A549 (cell line): ENCODE measurements at regions of chr17 and their contacts with region 1.

Region 1: DNA sequence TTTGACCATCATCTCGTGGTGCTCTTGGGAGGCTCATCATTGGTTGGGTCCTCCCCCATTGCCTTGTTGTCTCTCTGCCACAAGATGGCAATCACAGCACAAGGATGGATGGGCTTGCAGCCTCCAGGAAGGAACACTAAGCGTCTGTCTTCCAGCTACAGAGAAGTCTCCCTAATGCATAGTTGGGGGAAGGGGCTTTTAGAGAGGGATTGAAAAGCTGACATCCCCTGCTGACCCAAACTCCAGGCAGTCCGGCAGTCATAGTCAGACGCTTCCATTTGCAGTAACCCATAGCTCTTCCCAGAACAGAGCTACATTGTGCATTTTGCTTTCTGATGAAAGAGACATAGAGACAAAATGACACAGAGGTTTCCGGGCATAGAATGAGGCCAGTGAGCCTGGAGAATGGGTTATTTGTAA is 111.4 kb downstream of the UTP18 start:
- DNase-seq: peak; percentile 86 to 88
- ATAC-seq: peak; percentile 96 to 98
- H3K4me3 ChIP-seq: no peak overlapping the region
- H3K27ac ChIP-seq: peak overlapping the region; percentile 37 to 59; a peak in 4 of 6 replicates
- H3K4me1 ChIP-seq: 0 out of 3 replicates have a peak, but pooled peaks cover 3% of the 10 kb centered on the region
- CTCF ChIP-seq: peak; percentile 94
- EP300 ChIP-seq: no peak
- POLR2A ChIP-seq: no peak
- RAD21 ChIP-seq: peak; percentile 98 to 100

Region 2: GRCh38 chr17:51185763-51186332 is 185.9 kb before region 1 on chr17:
- CTCF ChIA-PET with region 1: no interaction called
- POLR2A ChIA-PET with region 1: no interaction called
- DNase-seq: no peak
- ATAC-seq: no peak
- H3K4me3 ChIP-seq: no peak overlapping the region
- H3K27ac ChIP-seq: no peak overlapping the region
- H3K4me1 ChIP-seq: no peaks in the 10 kb centered on the region
- CTCF ChIP-seq: no peak
- EP300 ChIP-seq: no peak
- POLR2A ChIP-seq: no peak
- RAD21 ChIP-seq: no peak

Region 3: GRCh38 chr17:51391982-51392654 is 20.4 kb after region 1 on chr17:
- CTCF ChIA-PET with region 1: interaction called, 18 read pairs
- POLR2A ChIA-PET with region 1: no interaction called
- DNase-seq: peak in 1 of 2 experiments; percentile 28
- ATAC-seq: peak; percentile 40 to 60; a peak in 3 of 6 replicates
- H3K4me3 ChIP-seq: no peak overlapping the region
- H3K27ac ChIP-seq: peak overlapping the region; percentile 15 to 19; a peak in 3 of 6 replicates
- H3K4me1 ChIP-seq: peaks cover 18% of the 10 kb centered on the region
- CTCF ChIP-seq: no peak
- EP300 ChIP-seq: no peak
- POLR2A ChIP-seq: no peak
- RAD21 ChIP-seq: no peak

Region 4: GRCh38 chr17:51423421-51424154 is 51.8 kb after region 1 on chr17:
- CTCF ChIA-PET with region 1: interaction called, 21 read pairs
- POLR2A ChIA-PET with region 1: no interaction called
- DNase-seq: peak; percentile 39 to 75
- ATAC-seq: peak; percentile 76
- H3K4me3 ChIP-seq: peak overlapping the region; percentile 22; the same call in 1 of the 3 replicates
- H3K27ac ChIP-seq: peak overlapping the region; percentile 68 to 77
- H3K4me1 ChIP-seq: peaks cover 27% of the 10 kb centered on the region
- CTCF ChIP-seq: no peak
- EP300 ChIP-seq: peak; percentile 45 to 68; a peak in 2 of 5 replicates
- POLR2A ChIP-seq: no peak
- RAD21 ChIP-seq: 0 out of 5 replicates have a peak, but pooled peaks of 1 of the 2 experiments have one; percentile 19

Region 5: DNA sequence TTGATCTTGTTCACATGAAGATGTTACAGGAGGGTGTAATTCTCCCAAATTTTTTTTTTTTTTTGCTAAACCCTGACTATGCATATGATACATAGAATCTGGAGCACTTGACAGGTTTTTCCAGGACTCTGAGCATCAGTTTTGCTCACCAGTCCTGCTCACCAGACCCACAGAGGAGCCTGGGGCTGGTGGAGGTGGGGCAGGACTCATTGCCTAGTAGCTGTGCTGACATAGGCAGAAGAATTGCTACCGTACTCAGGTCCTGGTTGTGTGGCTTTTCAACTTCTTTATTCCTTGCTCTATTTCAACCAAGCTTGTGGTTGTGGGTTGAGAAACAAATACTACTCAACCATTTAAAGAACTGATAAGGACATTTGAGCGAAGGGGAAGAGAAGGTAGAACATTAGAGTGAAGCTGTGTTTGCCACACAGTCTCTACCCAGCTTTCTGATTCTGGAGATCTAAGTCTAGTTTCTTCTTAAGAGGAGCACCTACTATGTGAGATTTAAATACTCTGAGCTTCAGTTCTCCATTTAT is 101.0 kb after region 1 on chr17:
- CTCF ChIA-PET with region 1: interaction called, 13 read pairs
- POLR2A ChIA-PET with region 1: no interaction called
- DNase-seq: no peak
- ATAC-seq: 0 out of 6 replicates have a peak, but pooled peaks of 1 of the 2 experiments have one; percentile 38
- H3K4me3 ChIP-seq: no peak overlapping the region
- H3K27ac ChIP-seq: no peak overlapping the region
- H3K4me1 ChIP-seq: no peaks in the 10 kb centered on the region
- CTCF ChIP-seq: no peak
- EP300 ChIP-seq: no peak
- POLR2A ChIP-seq: no peak
- RAD21 ChIP-seq: no peak

Region 6: DNA sequence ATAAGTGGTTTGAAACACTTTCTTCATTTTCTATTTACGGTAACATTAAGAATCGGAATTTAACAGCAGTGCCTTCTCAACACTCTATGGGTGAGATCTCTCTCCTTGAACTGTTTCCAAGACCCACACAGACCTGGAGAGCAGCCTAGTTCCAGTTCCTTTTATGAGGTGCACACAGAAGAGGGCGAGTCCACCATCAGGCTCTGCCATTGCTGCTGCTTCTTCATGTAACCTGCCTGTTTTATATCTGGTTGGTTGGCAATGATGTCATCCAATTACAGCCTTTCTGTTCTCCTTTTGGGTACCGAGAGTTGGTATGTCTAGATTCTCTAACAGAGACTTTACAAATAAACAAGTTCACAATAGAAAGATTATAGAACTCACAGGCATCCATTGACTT is 114.3 kb after region 1 on chr17:
- CTCF ChIA-PET with region 1: no interaction called
- POLR2A ChIA-PET with region 1: no interaction called
- DNase-seq: no peak
- ATAC-seq: no peak
- H3K4me3 ChIP-seq: no peak overlapping the region
- H3K27ac ChIP-seq: no peak overlapping the region
- H3K4me1 ChIP-seq: no peaks in the 10 kb centered on the region
- CTCF ChIP-seq: no peak
- EP300 ChIP-seq: no peak
- POLR2A ChIP-seq: no peak
- RAD21 ChIP-seq: no peak

Region 7: DNA sequence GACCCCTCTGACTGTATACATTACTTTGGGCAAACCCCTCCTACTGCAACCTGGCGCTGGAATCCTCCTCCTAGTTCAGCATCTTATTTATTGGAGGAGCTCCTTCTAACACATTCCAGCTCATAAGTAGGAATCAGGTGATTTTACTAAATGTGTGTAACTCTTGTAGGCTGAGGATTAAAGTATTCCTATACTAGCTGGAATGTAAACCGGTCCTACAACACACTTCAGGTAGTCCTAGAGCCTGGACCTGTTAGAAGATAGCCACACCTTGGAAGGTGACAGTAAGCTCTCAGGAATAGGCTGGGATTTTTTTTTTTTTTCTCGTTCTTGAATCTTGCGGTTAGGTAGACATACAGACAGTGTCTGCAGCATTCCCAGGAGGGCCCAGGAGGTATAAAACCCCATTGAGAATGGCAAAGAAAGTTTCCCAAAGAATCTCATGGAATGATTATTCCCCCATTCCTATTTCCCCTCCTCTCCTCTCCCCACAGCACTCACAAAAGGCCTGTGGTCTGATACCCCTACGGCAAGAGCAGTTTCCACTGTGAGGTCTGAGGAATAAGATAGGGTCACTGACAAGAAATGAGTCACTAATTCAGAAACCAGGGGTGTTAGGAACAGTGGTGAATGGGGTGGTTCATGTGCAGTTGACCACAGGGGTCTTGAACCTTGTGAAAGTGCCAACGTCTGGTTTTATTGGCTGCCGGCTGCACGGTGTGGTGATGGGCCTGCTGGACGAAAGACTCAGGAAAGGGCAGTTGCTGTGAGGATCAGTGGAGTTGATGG is 155.6 kb after region 1 on chr17:
- CTCF ChIA-PET with region 1: interaction called, 186 read pairs
- POLR2A ChIA-PET with region 1: no interaction called
- DNase-seq: no peak
- ATAC-seq: no peak
- H3K4me3 ChIP-seq: no peak overlapping the region
- H3K27ac ChIP-seq: no peak overlapping the region
- H3K4me1 ChIP-seq: no peaks in the 10 kb centered on the region
- CTCF ChIP-seq: no peak
- EP300 ChIP-seq: no peak
- POLR2A ChIP-seq: no peak
- RAD21 ChIP-seq: no peak

Region 8: DNA sequence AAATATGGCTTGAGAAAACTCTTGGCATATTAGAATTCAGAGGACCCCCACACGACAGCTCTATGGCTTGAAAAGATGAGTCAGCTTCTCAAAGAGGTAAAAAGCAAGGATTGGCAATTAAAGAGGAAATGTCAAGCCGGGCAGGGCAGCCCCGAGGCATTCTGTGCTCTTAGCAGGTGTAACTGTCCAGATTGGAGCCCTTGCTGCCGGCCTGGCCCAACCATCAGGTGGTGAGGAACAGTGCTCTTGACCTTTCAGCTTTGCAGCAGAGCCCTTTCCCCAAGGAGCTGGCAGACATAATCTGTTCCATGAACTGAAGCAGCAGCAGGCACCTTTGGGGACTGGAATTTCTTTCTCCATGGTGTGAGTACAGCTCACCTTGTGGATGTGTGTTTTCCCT is 176.4 kb after region 1 on chr17:
- CTCF ChIA-PET with region 1: interaction called, 14 read pairs
- POLR2A ChIA-PET with region 1: no interaction called
- DNase-seq: no peak
- ATAC-seq: no peak
- H3K4me3 ChIP-seq: no peak overlapping the region
- H3K27ac ChIP-seq: no peak overlapping the region
- H3K4me1 ChIP-seq: no peaks in the 10 kb centered on the region
- CTCF ChIP-seq: no peak
- EP300 ChIP-seq: no peak
- POLR2A ChIP-seq: no peak
- RAD21 ChIP-seq: no peak

Region 9: DNA sequence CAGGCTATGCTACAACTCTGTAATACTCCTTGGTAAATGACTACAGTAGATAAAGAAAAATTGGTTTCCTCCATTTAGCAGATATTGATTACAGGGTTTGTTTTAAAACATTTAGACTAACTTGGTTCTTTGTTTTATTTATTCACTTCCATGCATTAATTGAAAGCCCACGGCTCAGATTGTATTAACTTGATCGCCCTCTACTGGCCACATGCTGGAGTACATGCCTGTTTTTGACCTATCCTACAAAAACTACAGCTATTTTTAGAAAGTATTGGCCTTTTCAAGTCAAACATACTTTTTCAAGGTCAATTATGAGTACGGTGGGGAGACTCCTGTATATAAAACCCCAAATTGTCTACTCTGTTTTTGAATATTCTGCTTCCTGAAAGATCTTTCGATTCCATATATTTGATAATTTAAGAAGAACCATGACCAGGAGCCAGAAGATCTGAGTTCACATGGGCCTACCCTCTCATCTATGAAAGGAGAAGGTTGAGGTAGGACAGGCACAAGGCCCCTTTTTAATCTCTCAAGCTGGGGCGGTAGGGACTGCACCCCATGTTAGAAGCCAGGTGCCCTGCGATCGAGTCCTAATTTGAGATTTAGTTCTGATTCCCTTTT is 735.0 kb after region 1 on chr17:
- CTCF ChIA-PET with region 1: interaction called, 11 read pairs
- POLR2A ChIA-PET with region 1: no interaction called
- DNase-seq: peak; percentile 41 to 43
- ATAC-seq: peak in 1 of 2 experiments; percentile 71; a peak in 3 of 6 replicates
- H3K4me3 ChIP-seq: no peak overlapping the region
- H3K27ac ChIP-seq: no peak overlapping the region
- H3K4me1 ChIP-seq: no peaks in the 10 kb centered on the region
- CTCF ChIP-seq: peak; percentile 83
- EP300 ChIP-seq: no peak
- POLR2A ChIP-seq: no peak
- RAD21 ChIP-seq: peak; percentile 71 to 77